Caco-2 (cell line): ENCODE measurements at regions of chr16 and their contacts with region 1.

Region 1: GRCh38 chr16:2251483-2252240 is at the start of gene ECI1:
- DNase-seq: peak; percentile 92 to 96
- H3K4me3 ChIP-seq: peak within 1 kb of the TSS; percentile 69
- H3K4me3 Mint-ChIP-seq: peak within 1 kb of the TSS; percentile 89
- H3K27ac Mint-ChIP-seq: peak within 1 kb of the TSS; percentile 95
- H3K4me1 ChIP-seq: peaks cover 7% of the 10 kb centered on the region
- H3K4me1 Mint-ChIP-seq: peaks cover 7% of the 10 kb centered on the region
- H3K27me3 ChIP-seq: no peaks in the 10 kb centered on the region
- H3K27me3 Mint-ChIP-seq: no peaks in the 10 kb centered on the region
- CTCF ChIP-seq: peak; percentile 60 to 69
- total RNA-seq, gene ECI1: 135 and 157 TPM in 2 replicates

Region 2: GRCh38 chr16:2194852-2195321 is 56.8 kb before region 1 on chr16:
- CTCF ChIA-PET with region 1: interaction called, 29 read pairs
- POLR2A ChIA-PET with region 1: interaction called, 10 read pairs
- intact Hi-C with region 1: loop called (anchors 2 kb)
- DNase-seq: peak; percentile 70 to 73
- H3K4me3 ChIP-seq: peak overlapping the region; percentile 49
- H3K4me3 Mint-ChIP-seq: peak overlapping the region; percentile 63
- H3K27ac Mint-ChIP-seq: no peak overlapping the region
- H3K4me1 ChIP-seq: peaks cover 9% of the 10 kb centered on the region
- H3K4me1 Mint-ChIP-seq: no peaks in the 10 kb centered on the region
- H3K27me3 ChIP-seq: no peaks in the 10 kb centered on the region
- H3K27me3 Mint-ChIP-seq: no peaks in the 10 kb centered on the region
- CTCF ChIP-seq: peak in 1 of 2 experiments; percentile 49